ENCODE measurements at regions of chr7 and their contacts with region 1.

Region 1: DNA sequence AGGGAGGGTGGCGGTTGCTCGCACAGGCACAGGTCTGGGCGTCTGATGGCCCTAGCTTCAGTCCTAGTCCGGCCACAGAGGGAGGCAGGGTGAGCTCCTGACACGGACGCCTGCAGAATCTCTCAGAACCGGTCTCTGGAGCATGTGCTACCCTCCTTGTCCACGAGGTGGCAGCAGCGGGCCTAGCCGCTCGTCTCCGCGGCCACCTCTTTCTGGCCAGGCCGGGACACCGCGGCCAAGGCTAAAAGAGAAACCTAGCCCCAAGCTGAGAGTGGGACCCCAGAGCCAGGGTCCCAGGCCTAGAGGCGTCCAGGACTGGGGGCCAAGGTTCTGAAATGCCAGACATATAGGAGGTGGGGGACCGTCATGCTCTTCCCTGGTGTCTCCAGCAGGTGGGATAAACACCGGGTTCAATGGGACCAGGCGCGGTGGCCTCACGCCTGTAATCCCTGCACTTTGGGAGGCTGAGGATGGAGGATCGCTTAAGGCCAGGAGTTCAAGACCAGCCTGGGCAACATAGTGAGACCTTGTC is 3.2 kb upstream of the LAT2 start:
- DNase-seq: peak; percentile 94
- H3K4me3 ChIP-seq: no peak overlapping the region
- H3K27ac ChIP-seq: no peak overlapping the region
- H3K4me1 ChIP-seq: peaks cover 0 to 4% of the 10 kb centered on the region in 2 experiments; a peak in 3 of 4 replicates
- H3K27me3 ChIP-seq: no peaks in the 10 kb centered on the region
- CTCF ChIP-seq: peak; percentile 100
- EP300 ChIP-seq: no peak
- RAD21 ChIP-seq: peak; percentile 91

Region 2: GRCh38 chr7:73960548-73960947 is 246.1 kb before region 1 on chr7:
- CTCF ChIA-PET with region 1: no interaction called
- POLR2A ChIA-PET with region 1: no interaction called
- DNase-seq: no peak
- H3K4me3 ChIP-seq: no peak overlapping the region
- H3K27ac ChIP-seq: no peak overlapping the region
- H3K4me1 ChIP-seq: no peaks in the 10 kb centered on the region
- H3K27me3 ChIP-seq: no peaks in the 10 kb centered on the region
- CTCF ChIP-seq: no peak
- EP300 ChIP-seq: no peak
- RAD21 ChIP-seq: no peak

Region 3: GRCh38 chr7:74043523-74043951 is 163.1 kb before region 1 on chr7:
- CTCF ChIA-PET with region 1: interaction called, 10 read pairs
- POLR2A ChIA-PET with region 1: no interaction called
- DNase-seq: peak; percentile 91
- H3K4me3 ChIP-seq: peak overlapping the region in 1 of 2 experiments; percentile 37; a peak in 2 of 4 replicates
- H3K27ac ChIP-seq: peak overlapping the region; percentile 31 to 99; a peak in 3 of 4 replicates
- H3K4me1 ChIP-seq: peaks cover 20 to 65% of the 10 kb centered on the region in 2 experiments
- H3K27me3 ChIP-seq: no peaks in the 10 kb centered on the region
- CTCF ChIP-seq: no peak
- EP300 ChIP-seq: peak in 1 of 2 experiments; percentile 70; a peak in 1 of 4 replicates
- RAD21 ChIP-seq: no peak; the same call in 1 of the 2 replicates

Region 4: GRCh38 chr7:74094224-74095101 is 112.2 kb before region 1 on chr7:
- CTCF ChIA-PET with region 1: interaction called, 11 read pairs
- POLR2A ChIA-PET with region 1: no interaction called
- DNase-seq: peak; percentile 90
- H3K4me3 ChIP-seq: peak overlapping the region; percentile 36 to 60
- H3K27ac ChIP-seq: peak overlapping the region; percentile 95
- H3K4me1 ChIP-seq: peaks cover 41 to 50% of the 10 kb centered on the region in 2 experiments; a peak in 3 of 4 replicates
- H3K27me3 ChIP-seq: no peaks in the 10 kb centered on the region
- CTCF ChIP-seq: no peak
- EP300 ChIP-seq: peak; percentile 21 to 83; a peak in 2 of 4 replicates
- RAD21 ChIP-seq: peak; percentile 30

Region 5: GRCh38 chr7:74217455-74218342 is 11.0 kb after region 1 on chr7:
- CTCF ChIA-PET with region 1: interaction called, 48 read pairs
- POLR2A ChIA-PET with region 1: interaction called, 3 read pairs
- DNase-seq: no peak
- H3K4me3 ChIP-seq: no peak overlapping the region
- H3K27ac ChIP-seq: no peak overlapping the region
- H3K4me1 ChIP-seq: no peaks in the 10 kb centered on the region
- H3K27me3 ChIP-seq: no peaks in the 10 kb centered on the region
- CTCF ChIP-seq: no peak
- EP300 ChIP-seq: no peak
- RAD21 ChIP-seq: no peak

Region 6: GRCh38 chr7:74254129-74254857 is 47.6 kb after region 1 on chr7 and contains the start of gene RFC2:
- CTCF ChIA-PET with region 1: interaction called, 12 read pairs
- POLR2A ChIA-PET with region 1: interaction called, 4 read pairs
- DNase-seq: peak; percentile 100
- H3K4me3 ChIP-seq: peak within 1 kb of the TSS; percentile 65 to 82
- H3K27ac ChIP-seq: peak within 1 kb of the TSS; percentile 92 to 96
- H3K4me1 ChIP-seq: peaks cover 5 to 6% of the 10 kb centered on the region in 2 experiments; a peak in 1 of 4 replicates
- H3K27me3 ChIP-seq: no peaks in the 10 kb centered on the region
- CTCF ChIP-seq: no peak
- EP300 ChIP-seq: no peak
- RAD21 ChIP-seq: peak; percentile 5; the same call in 1 of the 2 replicates
- polyA plus RNA-seq, gene RFC2: 31.2 and 36.1 TPM in 2 replicates

Region 7: DNA sequence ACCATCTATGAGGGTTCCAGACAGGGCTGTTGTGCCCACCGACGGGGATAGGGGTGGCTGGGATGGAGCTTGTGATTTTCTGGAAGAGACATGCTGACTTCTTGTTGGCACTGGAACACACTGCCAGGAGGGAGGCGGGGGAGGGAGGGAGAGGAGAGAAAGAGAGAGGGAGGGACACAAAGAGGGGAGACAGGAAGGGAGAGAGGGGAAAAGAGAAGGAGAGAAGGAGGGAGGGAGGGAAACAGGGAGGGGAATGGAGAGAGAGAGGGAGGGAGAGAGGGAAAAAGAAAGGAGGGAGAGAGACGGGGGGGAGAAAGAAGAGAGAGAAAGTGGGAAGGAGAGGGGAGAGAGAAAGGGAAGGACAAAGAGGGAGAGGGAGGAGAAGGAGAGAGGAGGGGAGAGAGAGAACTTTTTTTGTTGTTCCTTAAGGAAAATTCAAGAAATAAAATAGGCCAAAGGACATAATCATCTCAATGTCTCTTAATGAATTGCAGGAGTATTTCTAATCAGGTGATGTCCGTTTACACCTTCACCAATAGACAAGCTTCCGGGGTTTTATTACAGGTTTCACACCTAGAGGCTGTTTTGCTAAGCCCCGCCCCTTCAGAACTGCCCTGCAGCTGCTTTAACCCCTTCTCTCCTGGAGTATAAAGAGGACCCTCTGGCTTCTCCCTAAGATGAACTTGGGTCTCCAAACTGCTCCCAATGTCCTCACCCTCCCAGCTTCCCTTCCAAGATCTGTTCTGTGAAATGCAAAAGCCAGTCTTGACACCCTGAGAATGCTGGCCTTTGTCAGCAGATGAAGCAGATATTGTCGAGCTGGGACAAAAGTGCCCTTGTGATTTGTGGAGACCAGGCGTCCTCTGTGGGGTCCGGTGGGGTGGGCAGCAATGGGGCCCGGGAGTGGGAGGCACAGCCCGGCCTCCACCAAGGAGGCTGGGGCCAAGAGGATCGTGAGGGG is 165.0 kb after region 1 on chr7:
- CTCF ChIA-PET with region 1: interaction called, 11 read pairs
- POLR2A ChIA-PET with region 1: no interaction called
- DNase-seq: no peak
- H3K4me3 ChIP-seq: no peak overlapping the region
- H3K27ac ChIP-seq: 0 out of 4 replicates have a peak overlapping the region, but pooled peaks of 1 of the 2 experiments have one; percentile 4
- H3K4me1 ChIP-seq: no peaks in the 10 kb centered on the region; a peak in 1 of 4 replicates
- H3K27me3 ChIP-seq: no peaks in the 10 kb centered on the region
- CTCF ChIP-seq: no peak
- EP300 ChIP-seq: no peak
- RAD21 ChIP-seq: no peak

Measured in SK-N-SH (cell line).